Activated T-helper 1 cell treated with anti-CD3 and anti-CD28 coated beads, Interleukin-12 subunit alpha, Interleukin-12 subunit beta, Interleukin-2, Interleukin-4 antibody, amounts not matched to agents 30 ng/mL and 10 ng/mL and 1 ng/mL, durations not matched to agents 14 hours and 24 hours and 36 hours (primary cell): ENCODE measurements at regions of chr4 and their contacts with region 1.

Region 1: GRCh38 chr4:9762823-9763475 is 18.5 kb upstream of the DRD5 start:
- DNase-seq: peak; percentile 40
- H3K4me3 Mint-ChIP-seq: no peak overlapping the region
- H3K27ac Mint-ChIP-seq: no peak overlapping the region
- H3K4me1 Mint-ChIP-seq: no peaks in the 10 kb centered on the region
- H3K27me3 Mint-ChIP-seq: peaks cover 11% of the 10 kb centered on the region

Region 2: GRCh38 chr4:9898596-9899305 is 135.8 kb after region 1 on chr4:
- intact Hi-C with region 1: loop called (anchors 1 kb)
- DNase-seq: no peak
- H3K4me3 Mint-ChIP-seq: no peak overlapping the region
- H3K27ac Mint-ChIP-seq: no peak overlapping the region
- H3K4me1 Mint-ChIP-seq: no peaks in the 10 kb centered on the region
- H3K27me3 Mint-ChIP-seq: peaks cover 8% of the 10 kb centered on the region

Region 3: GRCh38 chr4:10106421-10107039 is 343.6 kb after region 1 on chr4:
- intact Hi-C with region 1: loop called (anchors 10 kb)
- DNase-seq: peak; percentile 45
- H3K4me3 Mint-ChIP-seq: peak overlapping the region; percentile 61
- H3K27ac Mint-ChIP-seq: peak overlapping the region; percentile 81
- H3K4me1 Mint-ChIP-seq: peaks cover 99% of the 10 kb centered on the region
- H3K27me3 Mint-ChIP-seq: no peaks in the 10 kb centered on the region

Region 4: GRCh38 chr4:10403633-10404445 is 640.9 kb after region 1 on chr4:
- intact Hi-C with region 1: loop called (anchors 5 kb)
- DNase-seq: no peak
- H3K4me3 Mint-ChIP-seq: no peak overlapping the region
- H3K27ac Mint-ChIP-seq: no peak overlapping the region
- H3K4me1 Mint-ChIP-seq: no peaks in the 10 kb centered on the region
- H3K27me3 Mint-ChIP-seq: peaks cover 5% of the 10 kb centered on the region

Region 5: GRCh38 chr4:10535912-10536311 is 773.0 kb after region 1 on chr4:
- intact Hi-C with region 1: loop called (anchors 5 kb)
- DNase-seq: no peak
- H3K4me3 Mint-ChIP-seq: no peak overlapping the region
- H3K27ac Mint-ChIP-seq: no peak overlapping the region
- H3K4me1 Mint-ChIP-seq: no peaks in the 10 kb centered on the region
- H3K27me3 Mint-ChIP-seq: peaks cover 9% of the 10 kb centered on the region